ENCODE measurements at regions of chr4 and their contacts with region 1.

Region 1: GRCh38 chr4:74098450-74098994 is 473 bp downstream of the CXCL2 start:
- DNase-seq: no peak
- H3K4me3 Mint-ChIP-seq: peak overlapping the region; percentile 60
- H3K27ac Mint-ChIP-seq: no peak overlapping the region
- H3K4me1 Mint-ChIP-seq: peaks cover 14% of the 10 kb centered on the region
- H3K27me3 Mint-ChIP-seq: peaks cover 54% of the 10 kb centered on the region

Region 2: DNA sequence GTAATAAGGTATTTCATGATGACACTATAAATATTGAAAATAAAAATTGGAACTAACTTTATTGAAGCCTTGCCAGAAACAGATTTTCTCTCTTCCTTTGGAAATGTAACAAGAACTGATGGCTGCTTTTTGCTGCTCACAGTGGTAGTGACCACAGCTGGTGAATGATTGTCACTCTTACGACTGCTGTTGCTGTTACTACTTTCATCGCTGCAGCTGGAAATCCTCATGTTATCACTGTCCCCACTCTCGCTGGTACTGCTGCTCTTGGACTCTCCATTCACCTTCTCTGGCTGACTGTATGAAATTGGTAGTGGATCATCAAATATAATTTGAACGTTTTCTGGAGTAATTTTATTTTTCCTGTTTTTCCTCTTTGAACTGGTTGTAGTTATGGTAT is 1000.5 kb before region 1 on chr4:
- CTCF ChIA-PET with region 1: no interaction called
- intact Hi-C with region 1: no loop called
- DNase-seq: no peak
- H3K4me3 Mint-ChIP-seq: no peak overlapping the region
- H3K27ac Mint-ChIP-seq: peak overlapping the region; percentile 4
- H3K4me1 Mint-ChIP-seq: peaks cover 2% of the 10 kb centered on the region
- H3K27me3 Mint-ChIP-seq: no peaks in the 10 kb centered on the region

Region 3: DNA sequence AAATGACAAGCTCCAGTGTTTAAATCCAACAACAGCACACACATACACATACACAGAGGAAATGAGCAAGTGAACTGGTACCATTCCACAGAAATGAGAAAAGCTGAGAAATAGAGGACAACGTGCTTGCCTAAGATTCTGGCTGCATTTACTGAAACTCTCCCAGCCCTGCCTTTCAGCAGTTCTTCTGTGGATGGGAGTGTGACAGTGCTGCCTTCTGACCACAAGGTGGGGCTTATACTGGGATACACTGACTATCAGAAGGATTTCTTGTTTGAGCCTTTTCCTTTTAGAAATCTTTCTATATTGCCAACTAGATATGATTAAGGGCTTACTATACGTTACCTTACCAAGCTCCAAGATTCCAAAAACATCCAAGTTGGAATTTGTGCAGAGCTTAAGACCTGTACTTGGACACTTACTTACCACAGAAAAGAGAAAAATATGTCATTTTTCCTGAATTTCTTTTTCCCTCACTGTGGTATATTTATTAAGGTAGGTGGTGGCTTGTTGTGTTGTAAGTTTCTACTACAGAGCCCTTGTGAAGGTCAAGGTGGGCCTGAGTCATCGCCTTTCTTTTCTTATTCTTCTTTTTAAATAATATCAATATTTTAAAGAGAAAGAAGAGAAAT is 368.9 kb before region 1 on chr4:
- CTCF ChIA-PET with region 1: no interaction called
- intact Hi-C with region 1: loop called (anchors 1 kb)
- DNase-seq: peak; percentile 16
- H3K4me3 Mint-ChIP-seq: no peak overlapping the region
- H3K27ac Mint-ChIP-seq: no peak overlapping the region
- H3K4me1 Mint-ChIP-seq: no peaks in the 10 kb centered on the region
- H3K27me3 Mint-ChIP-seq: peaks cover 10% of the 10 kb centered on the region

Region 4: DNA sequence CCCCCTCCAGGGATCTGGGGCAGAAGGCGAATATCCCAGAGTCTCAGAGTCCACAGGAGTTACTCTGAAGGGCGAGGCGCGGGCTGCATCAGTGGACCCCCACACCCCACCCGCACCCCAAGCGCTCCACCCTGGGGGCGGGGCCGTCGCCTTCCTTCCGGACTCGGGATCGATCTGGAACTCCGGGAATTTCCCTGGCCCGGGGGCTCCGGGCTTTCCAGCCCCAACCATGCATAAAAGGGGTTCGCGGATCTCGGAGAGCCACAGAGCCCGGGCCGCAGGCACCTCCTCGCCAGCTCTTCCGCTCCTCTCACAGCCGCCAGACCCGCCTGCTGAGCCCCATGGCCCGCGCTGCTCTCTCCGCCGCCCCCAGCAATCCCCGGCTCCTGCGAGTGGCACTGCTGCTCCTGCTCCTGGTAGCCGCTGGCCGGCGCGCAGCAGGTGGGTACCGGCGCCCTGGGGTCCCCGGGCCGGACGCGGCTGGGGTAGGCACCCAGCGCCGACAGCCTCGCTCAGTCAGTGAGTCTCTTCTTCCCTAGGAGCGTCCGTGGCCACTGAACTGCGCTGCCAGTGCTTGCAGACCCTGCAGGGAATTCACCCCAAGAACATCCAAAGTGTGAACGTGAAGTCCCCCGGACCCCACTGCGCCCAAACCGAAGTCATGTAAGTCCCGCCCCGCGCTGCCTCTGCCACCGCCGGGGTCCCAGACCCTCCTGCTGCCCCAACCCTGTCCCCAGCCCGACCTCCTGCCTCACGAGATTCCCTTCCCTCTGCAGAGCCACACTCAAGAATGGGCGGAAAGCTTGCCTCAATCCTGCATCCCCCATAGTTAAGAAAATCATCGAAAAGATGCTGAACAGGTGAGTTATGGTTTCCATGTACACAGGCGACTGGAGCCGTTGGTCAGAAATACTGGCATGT is 229.1 kb before region 1 on chr4 and contains the start of gene CXCL1:
- CTCF ChIA-PET with region 1: no interaction called
- intact Hi-C with region 1: loop called (anchors 10 kb)
- DNase-seq: no peak
- H3K4me3 Mint-ChIP-seq: no peak within 1 kb of the TSS
- H3K27ac Mint-ChIP-seq: no peak within 1 kb of the TSS
- H3K4me1 Mint-ChIP-seq: peaks cover 3% of the 10 kb centered on the region
- H3K27me3 Mint-ChIP-seq: peaks cover 30% of the 10 kb centered on the region
- total RNA-seq, gene CXCL1: not detected

Region 5: DNA sequence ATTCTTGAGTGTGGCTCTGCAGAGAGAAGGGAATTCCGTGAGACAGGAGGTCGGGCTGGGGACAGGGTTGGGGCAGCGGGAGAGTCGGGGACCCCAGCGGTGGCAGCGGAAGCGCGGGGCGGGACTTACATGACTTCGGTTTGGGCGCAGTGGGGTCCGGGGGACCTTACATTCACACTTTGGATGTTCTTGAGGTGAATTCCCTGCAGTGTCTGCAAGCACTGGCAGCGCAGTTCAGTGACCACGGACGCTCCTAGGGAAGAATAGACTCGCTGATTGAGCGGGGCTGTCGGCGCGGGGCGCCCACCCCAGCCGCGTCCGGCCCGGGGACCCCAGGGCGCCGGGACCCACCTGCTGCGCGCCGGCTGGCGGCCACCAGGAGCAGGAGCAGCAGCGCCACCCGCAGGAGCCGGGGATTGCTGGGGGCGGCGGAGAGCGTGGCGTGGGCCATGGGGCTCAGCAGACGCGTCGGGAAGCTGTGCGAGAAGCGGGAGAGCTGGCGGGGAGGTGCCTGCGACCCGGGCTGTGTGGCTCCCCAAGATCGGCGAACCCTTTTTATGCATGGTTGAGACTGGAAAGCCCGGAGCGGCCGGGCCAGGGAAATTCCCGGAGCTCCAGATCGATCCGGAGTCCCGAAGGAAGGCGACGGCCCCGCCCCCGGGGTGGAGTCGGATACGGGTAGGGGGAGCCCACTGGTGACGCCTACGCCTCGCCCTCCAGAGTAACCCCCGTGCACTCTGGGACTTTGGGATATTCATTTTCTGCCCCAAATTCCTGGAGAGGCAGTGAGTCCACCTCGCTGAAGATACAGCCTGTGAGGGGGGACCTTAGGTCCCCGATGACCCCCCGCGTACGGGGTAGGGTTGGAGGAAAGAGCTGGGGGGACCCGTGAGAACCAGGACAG is 60.1 kb before region 1 on chr4 and contains the start of gene CXCL3:
- CTCF ChIA-PET with region 1: no interaction called
- intact Hi-C with region 1: loop called (anchors 5 kb)
- DNase-seq: peak; percentile 17
- H3K4me3 Mint-ChIP-seq: peak within 1 kb of the TSS; percentile 65
- H3K27ac Mint-ChIP-seq: no peak within 1 kb of the TSS
- H3K4me1 Mint-ChIP-seq: peaks cover 7% of the 10 kb centered on the region
- H3K27me3 Mint-ChIP-seq: peaks cover 45% of the 10 kb centered on the region
- total RNA-seq, gene CXCL3: not detected

Region 6: GRCh38 chr4:74431113-74431826 is 332.7 kb after region 1 on chr4:
- CTCF ChIA-PET with region 1: no interaction called
- intact Hi-C with region 1: no loop called
- DNase-seq: no peak
- H3K4me3 Mint-ChIP-seq: no peak overlapping the region
- H3K27ac Mint-ChIP-seq: no peak overlapping the region
- H3K4me1 Mint-ChIP-seq: no peaks in the 10 kb centered on the region
- H3K27me3 Mint-ChIP-seq: peaks cover 4% of the 10 kb centered on the region